Common myeloid progenitor, CD34-positive (primary cell): ENCODE measurements at regions of chr19 and their contacts with region 1.

Region 1: GRCh38 chr19:41263850-41264580 is at the start of gene HNRNPUL1:
- DNase-seq: peak; percentile 100
- H3K4me3 ChIP-seq: peak within 1 kb of the TSS; percentile 64 to 97 (median 90)
- H3K27ac ChIP-seq: peak within 1 kb of the TSS; percentile 95 to 99
- H3K4me1 ChIP-seq: peaks cover 9 to 37% (median 28%) of the 10 kb centered on the region in 4 experiments
- H3K27me3 ChIP-seq: no peaks in the 10 kb centered on the region

Region 2: GRCh38 chr19:41206926-41207750 is 56.9 kb before region 1 on chr19:
- CTCF ChIA-PET with region 1: interaction called, 124 read pairs
- POLR2A ChIA-PET with region 1: interaction called, 13 read pairs
- DNase-seq: no peak
- H3K4me3 ChIP-seq: no peak overlapping the region
- H3K27ac ChIP-seq: no peak overlapping the region
- H3K4me1 ChIP-seq: peaks cover 0 to 3% (median 0%) of the 10 kb centered on the region in 4 experiments
- H3K27me3 ChIP-seq: no peaks in the 10 kb centered on the region

Region 3: GRCh38 chr19:41276231-41276630 is 12.2 kb after region 1 on chr19:
- CTCF ChIA-PET with region 1: interaction called, 10 read pairs
- POLR2A ChIA-PET with region 1: interaction called, 4 read pairs
- DNase-seq: no peak
- H3K4me3 ChIP-seq: no peak overlapping the region
- H3K27ac ChIP-seq: no peak overlapping the region
- H3K4me1 ChIP-seq: no peaks in the 10 kb centered on the region
- H3K27me3 ChIP-seq: no peaks in the 10 kb centered on the region